GM12878 (cell line): ENCODE measurements at regions of chr12 and their contacts with region 1.

Region 1: DNA sequence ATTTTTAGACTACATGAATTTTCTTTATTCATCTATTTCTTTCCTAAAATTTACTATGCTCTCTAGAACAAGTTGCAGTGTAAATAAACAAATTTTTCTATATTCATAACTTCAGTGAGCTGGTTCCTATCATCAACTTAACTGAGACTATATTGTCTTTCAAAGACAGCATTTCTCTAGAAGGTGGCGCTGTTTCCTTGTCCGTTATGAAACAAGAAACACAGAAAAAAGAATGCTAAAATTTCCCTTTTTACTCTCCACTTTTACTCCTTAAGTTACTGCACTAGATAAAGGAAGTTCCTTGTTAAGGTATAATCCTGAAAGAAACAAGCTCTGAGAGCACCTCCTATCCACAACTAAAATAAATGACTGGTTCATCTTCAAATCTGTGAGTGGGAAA is 8.2 kb upstream of the CLEC2A start:
- DNase-seq: no peak
- ATAC-seq: no peak
- H3K4me3 ChIP-seq: no peak overlapping the region
- H3K27ac ChIP-seq: no peak overlapping the region
- H3K4me1 ChIP-seq: no peaks in the 10 kb centered on the region
- H3K27me3 ChIP-seq: peaks cover 0 to 3% of the 10 kb centered on the region in 2 experiments; a peak in 2 of 4 replicates
- CTCF ChIP-seq: peak; percentile 39 to 47 (median 47); a peak in 5 of 6 replicates
- EP300 ChIP-seq: no peak
- POLR2A ChIP-seq: no peak
- RAD21 ChIP-seq: peak; percentile 61

Region 2: GRCh38 chr12:10016881-10017280 is 76.5 kb after region 1 on chr12:
- CTCF ChIA-PET with region 1: interaction called, 13 read pairs
- POLR2A ChIA-PET with region 1: no interaction called
- RAD21 ChIA-PET with region 1: interaction called, 3 read pairs
- SMC1A ChIA-PET with region 1: no interaction called
- in situ Hi-C with region 1: no loop called
- intact Hi-C with region 1: no loop called
- DNase-seq: no peak
- ATAC-seq: no peak
- H3K4me3 ChIP-seq: no peak overlapping the region
- H3K27ac ChIP-seq: no peak overlapping the region
- H3K4me1 ChIP-seq: no peaks in the 10 kb centered on the region
- H3K27me3 ChIP-seq: peaks cover 0 to 4% of the 10 kb centered on the region in 2 experiments; a peak in 1 of 4 replicates
- CTCF ChIP-seq: no peak
- EP300 ChIP-seq: no peak
- POLR2A ChIP-seq: no peak
- RAD21 ChIP-seq: no peak

Region 3: GRCh38 chr12:10381928-10382628 is 441.7 kb after region 1 on chr12:
- CTCF ChIA-PET with region 1: no interaction called
- POLR2A ChIA-PET with region 1: no interaction called
- RAD21 ChIA-PET with region 1: no interaction called
- SMC1A ChIA-PET with region 1: no interaction called
- in situ Hi-C with region 1: no loop called
- intact Hi-C with region 1: no loop called
- DNase-seq: no peak
- ATAC-seq: no peak
- H3K4me3 ChIP-seq: no peak overlapping the region
- H3K27ac ChIP-seq: no peak overlapping the region
- H3K4me1 ChIP-seq: no peaks in the 10 kb centered on the region
- H3K27me3 ChIP-seq: no peaks in the 10 kb centered on the region
- CTCF ChIP-seq: no peak
- EP300 ChIP-seq: no peak
- POLR2A ChIP-seq: no peak
- RAD21 ChIP-seq: no peak